Heart right ventricle (tissue), 16 donors: ENCODE measurements at regions of chr14 and their contacts with region 1.

Region 1: GRCh38 chr14:72876710-72877063 is 17.2 kb downstream of the DPF3 start:
- DNase-seq: no peak
- ATAC-seq: peak in 1 of 8 donors; percentile 12
- H3K4me3 ChIP-seq: no peak overlapping the region
- H3K27ac ChIP-seq: no peak overlapping the region
- H3K4me1 ChIP-seq: peaks cover 0 to 47% (median 9%) of the 10 kb centered on the region in 9 donors
- H3K27me3 ChIP-seq: no peaks in the 10 kb centered on the region
- CTCF ChIP-seq: no peak

Region 2: GRCh38 chr14:72714094-72714493 is 162.6 kb before region 1 on chr14:
- intact Hi-C with region 1: no loop called
- DNase-seq: no peak
- ATAC-seq: no peak
- H3K4me3 ChIP-seq: peak overlapping the region in 1 of 10 donors; percentile 9
- H3K27ac ChIP-seq: peak overlapping the region in 9 of 10 donors; percentile 68 to 93 (median 71)
- H3K4me1 ChIP-seq: peaks cover 10 to 56% (median 40%) of the 10 kb centered on the region in 9 donors
- H3K27me3 ChIP-seq: no peaks in the 10 kb centered on the region
- CTCF ChIP-seq: no peak

Region 3: GRCh38 chr14:72844524-72844923 is 32.2 kb before region 1 on chr14:
- intact Hi-C with region 1: loop called in 1 of 10 experiments (anchors 5 kb)
- DNase-seq: no peak
- ATAC-seq: no peak
- H3K4me3 ChIP-seq: no peak overlapping the region
- H3K27ac ChIP-seq: peak overlapping the region in 1 of 10 donors; percentile 1
- H3K4me1 ChIP-seq: peaks cover 0 to 25% (median 4%) of the 10 kb centered on the region in 9 donors
- H3K27me3 ChIP-seq: no peaks in the 10 kb centered on the region
- CTCF ChIP-seq: no peak